SK-N-SH (cell line): ENCODE measurements at regions of chr20 and their contacts with region 1.

Region 1: DNA sequence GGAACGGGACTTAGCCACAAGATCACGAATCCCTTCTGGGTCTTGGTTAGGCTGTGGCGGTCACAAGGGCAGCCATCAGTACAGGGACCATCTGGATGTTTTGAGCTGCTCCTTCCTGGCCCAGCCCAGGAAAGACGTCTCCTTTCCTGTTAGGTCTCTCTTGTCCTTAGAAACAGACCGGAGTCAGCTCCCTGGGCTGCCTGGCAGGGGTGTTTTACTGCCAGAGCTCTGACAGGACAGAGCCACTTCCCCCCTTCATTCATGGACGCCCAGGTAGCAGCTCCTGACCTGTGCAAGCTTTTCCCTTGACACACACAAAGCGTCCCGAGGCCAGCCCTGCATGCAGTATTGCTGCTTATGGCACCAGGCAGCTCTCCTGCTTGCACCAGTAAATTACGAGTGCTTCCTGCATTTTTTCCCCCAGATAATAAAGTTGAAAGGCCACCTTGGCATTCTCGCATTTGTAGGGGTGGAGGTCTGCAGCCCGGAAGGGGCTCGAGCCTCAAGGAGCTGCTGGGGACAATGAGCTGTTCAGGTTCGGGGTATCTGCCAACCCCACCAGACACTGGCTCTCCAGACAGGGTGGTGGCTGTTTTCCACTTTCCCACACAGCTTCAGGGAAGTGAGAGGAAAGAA is 87.4 kb downstream of the NOL4L start:
- DNase-seq: no peak
- H3K4me3 ChIP-seq: no peak overlapping the region
- H3K27ac ChIP-seq: peak overlapping the region in 1 of 2 experiments; percentile 99; a peak in 2 of 4 replicates
- H3K4me1 ChIP-seq: peaks cover 0 to 35% of the 10 kb centered on the region in 2 experiments; a peak in 2 of 4 replicates
- H3K27me3 ChIP-seq: no peaks in the 10 kb centered on the region
- CTCF ChIP-seq: no peak
- EP300 ChIP-seq: no peak
- RAD21 ChIP-seq: no peak

Region 2: DNA sequence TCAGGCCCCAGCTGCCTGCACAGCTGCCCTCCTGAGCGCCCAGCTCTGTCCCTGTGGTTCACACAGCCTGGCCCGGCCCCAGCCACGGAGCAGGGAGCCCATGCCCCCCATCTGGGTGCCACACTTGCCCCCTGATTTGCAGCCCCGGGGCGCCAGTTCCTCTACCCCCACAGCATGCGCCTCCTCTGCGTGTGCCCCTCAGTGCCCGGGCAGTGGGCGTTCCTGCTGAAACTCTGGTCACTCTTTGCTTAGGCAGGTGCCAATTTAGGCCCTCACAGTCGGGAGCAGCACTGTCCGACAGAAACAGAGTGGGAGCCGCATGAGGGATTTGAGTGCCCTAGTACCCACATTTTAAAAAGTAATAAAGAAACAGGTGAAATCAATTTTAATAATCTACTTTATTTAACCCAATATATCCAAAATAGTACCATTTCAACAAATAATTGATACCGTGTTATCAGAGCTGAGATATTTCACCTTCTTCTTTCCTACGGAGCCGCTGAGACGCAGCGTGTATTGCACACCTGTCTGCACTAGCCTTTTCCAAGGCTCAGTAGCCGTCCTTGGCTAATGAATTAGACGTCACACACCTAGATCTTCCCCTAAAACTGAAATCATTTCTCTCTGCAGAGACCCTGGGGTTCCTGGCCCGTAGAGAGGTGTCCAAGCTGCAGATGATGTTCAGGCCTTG is 33.2 kb before region 1 on chr20:
- CTCF ChIA-PET with region 1: no interaction called
- POLR2A ChIA-PET with region 1: no interaction called
- DNase-seq: no peak
- H3K4me3 ChIP-seq: no peak overlapping the region
- H3K27ac ChIP-seq: peak overlapping the region in 1 of 2 experiments; percentile 60; a peak in 1 of 4 replicates
- H3K4me1 ChIP-seq: peaks cover 3 to 56% of the 10 kb centered on the region in 2 experiments; a peak in 3 of 4 replicates
- H3K27me3 ChIP-seq: no peaks in the 10 kb centered on the region
- CTCF ChIP-seq: no peak
- EP300 ChIP-seq: no peak
- RAD21 ChIP-seq: no peak

Region 3: DNA sequence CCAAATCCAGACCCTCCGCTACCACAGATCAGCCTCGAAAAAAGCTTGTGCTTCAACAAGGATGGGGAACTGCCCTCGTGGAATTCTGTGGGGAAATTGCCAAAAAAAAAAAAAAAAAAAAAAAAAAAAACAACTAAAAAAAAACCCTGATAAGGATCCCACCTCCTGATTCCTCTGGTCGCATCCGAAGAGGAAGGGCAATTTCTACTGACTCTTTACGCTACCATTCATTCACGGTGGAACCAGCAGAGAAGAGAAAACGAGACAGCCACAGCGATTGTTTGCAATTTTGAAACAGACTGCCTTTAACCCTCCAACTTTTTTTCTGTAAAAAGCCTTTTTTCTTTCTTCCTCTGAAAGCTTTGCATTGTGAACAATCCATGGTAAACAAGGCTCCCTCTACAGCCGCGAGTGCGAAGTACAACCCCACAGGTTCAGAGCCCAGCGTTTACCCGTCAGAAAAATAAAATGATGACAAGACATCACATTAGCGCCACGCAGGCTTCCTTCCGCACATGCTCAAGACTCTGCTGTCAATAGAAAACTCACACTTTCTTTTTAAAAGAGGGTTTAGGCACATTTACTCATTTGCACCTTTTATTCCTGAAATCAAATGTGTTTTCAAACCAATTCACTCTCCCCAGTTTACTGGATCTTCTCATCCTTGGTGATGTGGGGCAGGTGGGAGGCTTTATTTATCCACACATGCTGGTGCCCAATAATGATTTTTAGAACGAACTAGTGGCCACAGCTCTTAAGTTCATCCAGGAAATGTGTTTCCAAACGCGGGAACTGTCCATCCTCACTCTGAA is 12.5 kb before region 1 on chr20:
- CTCF ChIA-PET with region 1: interaction called, 31 read pairs
- POLR2A ChIA-PET with region 1: interaction called, 11 read pairs
- DNase-seq: peak; percentile 61
- H3K4me3 ChIP-seq: peak overlapping the region; percentile 53 to 61
- H3K27ac ChIP-seq: peak overlapping the region; percentile 87 to 100
- H3K4me1 ChIP-seq: peaks cover 0 to 33% of the 10 kb centered on the region in 2 experiments; a peak in 2 of 4 replicates
- H3K27me3 ChIP-seq: no peaks in the 10 kb centered on the region
- CTCF ChIP-seq: peak; percentile 79
- EP300 ChIP-seq: no peak
- RAD21 ChIP-seq: peak; percentile 72

Region 4: GRCh38 chr20:32509639-32510066 is 11.9 kb after region 1 on chr20:
- CTCF ChIA-PET with region 1: interaction called, 32 read pairs
- POLR2A ChIA-PET with region 1: interaction called, 10 read pairs
- DNase-seq: peak; percentile 75
- H3K4me3 ChIP-seq: no peak overlapping the region
- H3K27ac ChIP-seq: peak overlapping the region in 1 of 2 experiments; percentile 75; a peak in 2 of 4 replicates
- H3K4me1 ChIP-seq: peaks cover 0 to 44% of the 10 kb centered on the region in 2 experiments; a peak in 1 of 4 replicates
- H3K27me3 ChIP-seq: no peaks in the 10 kb centered on the region
- CTCF ChIP-seq: peak; percentile 60
- EP300 ChIP-seq: peak in 1 of 2 experiments; percentile 51; a peak in 2 of 4 replicates
- RAD21 ChIP-seq: peak; percentile 69

Region 5: DNA sequence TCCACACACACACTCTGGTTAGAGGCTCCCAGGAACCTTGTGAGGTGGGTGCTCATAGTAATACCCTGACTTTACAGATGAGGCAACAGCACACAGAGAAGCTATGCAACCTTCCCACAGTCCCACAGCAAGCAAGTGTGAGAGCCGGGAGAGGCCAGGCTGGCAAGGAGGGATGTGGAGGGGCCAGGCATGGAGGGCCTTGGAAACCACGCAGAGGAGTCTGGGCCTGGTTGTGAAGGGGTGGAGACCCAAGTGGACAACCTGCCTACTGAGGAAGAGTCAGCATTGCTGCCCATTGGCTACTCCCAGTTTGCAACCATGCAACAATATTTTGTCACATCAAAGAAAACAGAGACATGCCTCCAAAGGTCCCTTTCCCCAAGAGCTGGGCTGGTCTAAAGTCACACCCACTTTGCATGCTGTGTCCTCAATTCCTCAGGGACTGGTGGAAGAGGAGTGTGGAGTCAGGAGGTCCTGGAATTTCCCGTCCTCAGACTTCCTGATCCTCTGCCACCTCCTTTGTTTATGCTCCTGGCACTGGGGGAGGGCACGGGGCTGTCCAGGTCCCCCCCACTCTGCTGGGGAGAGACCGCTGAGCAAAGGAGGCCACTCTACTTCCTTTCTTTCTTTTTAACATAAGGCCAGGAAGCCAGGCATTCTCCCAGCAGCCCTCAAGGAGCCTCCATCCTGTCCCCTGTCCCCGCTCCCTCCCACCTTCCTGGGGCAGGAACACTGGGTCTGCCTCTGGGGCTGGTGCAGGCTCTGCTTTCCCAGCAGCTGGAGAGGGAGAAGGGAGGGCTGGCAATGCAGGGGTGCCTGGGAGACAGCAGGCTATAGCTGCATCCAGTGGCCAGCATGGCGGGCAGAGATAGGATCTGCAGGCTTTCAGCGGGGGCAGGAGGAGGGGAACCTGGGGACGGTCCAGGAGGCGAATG is 19.1 kb after region 1 on chr20:
- CTCF ChIA-PET with region 1: interaction called, 14 read pairs
- POLR2A ChIA-PET with region 1: interaction called, 4 read pairs
- DNase-seq: peak; percentile 89
- H3K4me3 ChIP-seq: no peak overlapping the region
- H3K27ac ChIP-seq: peak overlapping the region in 1 of 2 experiments; percentile 100; a peak in 3 of 4 replicates
- H3K4me1 ChIP-seq: peaks cover 0 to 62% of the 10 kb centered on the region in 2 experiments; a peak in 3 of 4 replicates
- H3K27me3 ChIP-seq: no peaks in the 10 kb centered on the region
- CTCF ChIP-seq: no peak
- EP300 ChIP-seq: peak in 1 of 2 experiments; percentile 91; a peak in 2 of 4 replicates
- RAD21 ChIP-seq: peak; percentile 33; the same call in 1 of the 2 replicates